AG04449 (cell line): ENCODE measurements at regions of chr22 and their contacts with region 1.

Region 1: GRCh38 chr22:37686002-37686982 is at the start of gene NOL12:
- DNase-seq: no peak
- H3K4me3 ChIP-seq: peak within 1 kb of the TSS; percentile 96
- CTCF ChIP-seq: no peak

Region 2: GRCh38 chr22:37623075-37624016 is 62.9 kb before region 1 on chr22:
- CTCF ChIA-PET with region 1: interaction called, 33 read pairs
- POLR2A ChIA-PET with region 1: interaction called, 5 read pairs
- DNase-seq: no peak
- H3K4me3 ChIP-seq: no peak overlapping the region
- CTCF ChIP-seq: peak; percentile 88

Region 3: DNA sequence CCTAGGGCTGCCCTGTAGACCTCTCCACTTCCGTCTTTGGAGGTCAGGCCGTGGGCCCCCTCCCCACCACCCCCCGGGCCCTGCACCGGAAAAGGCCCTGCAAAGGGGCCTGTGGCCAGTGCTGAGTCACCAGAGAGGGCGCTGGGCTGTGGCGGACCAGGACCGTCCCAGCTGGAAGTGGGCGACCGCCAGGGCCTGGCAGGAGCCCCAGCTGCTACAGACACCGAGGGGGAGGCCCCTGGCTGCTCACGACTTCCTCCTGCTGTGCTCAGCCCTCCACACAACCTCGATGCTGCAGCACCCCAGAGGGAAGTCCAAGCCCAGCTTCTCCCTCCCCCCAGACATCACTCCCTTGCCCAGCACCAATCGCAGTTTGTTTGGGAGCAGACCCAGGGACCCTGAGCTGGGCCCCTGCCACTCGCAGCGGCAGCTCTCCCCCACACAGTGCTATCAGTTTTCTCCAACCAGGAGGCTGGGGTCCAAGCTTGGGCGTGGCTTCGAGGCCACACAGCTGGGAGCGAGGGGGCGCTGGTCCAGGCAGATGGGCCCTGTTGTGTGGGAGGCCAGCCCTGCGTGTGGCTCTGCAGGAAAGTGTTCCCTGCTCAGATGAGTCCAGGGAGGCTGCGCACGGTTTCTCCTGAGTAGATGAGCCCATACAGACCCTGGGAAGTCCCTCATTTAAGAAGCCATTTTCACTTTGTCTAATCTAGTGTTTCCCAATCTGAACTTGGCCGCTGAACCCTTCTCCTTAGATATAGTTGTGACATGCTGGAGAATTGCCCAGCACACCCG is 52.5 kb before region 1 on chr22:
- CTCF ChIA-PET with region 1: interaction called, 333 read pairs
- POLR2A ChIA-PET with region 1: interaction called, 18 read pairs
- DNase-seq: peak; percentile 42
- H3K4me3 ChIP-seq: no peak overlapping the region; the same call in 1 of the 2 replicates
- CTCF ChIP-seq: peak; percentile 39

Region 4: GRCh38 chr22:37658133-37659065 is 27.9 kb before region 1 on chr22 and contains the start of gene PDXP:
- CTCF ChIA-PET with region 1: interaction called, 121 read pairs
- POLR2A ChIA-PET with region 1: interaction called, 41 read pairs
- DNase-seq: peak; percentile 100
- H3K4me3 ChIP-seq: peak within 1 kb of the TSS; percentile 78
- CTCF ChIP-seq: no peak

Region 5: DNA sequence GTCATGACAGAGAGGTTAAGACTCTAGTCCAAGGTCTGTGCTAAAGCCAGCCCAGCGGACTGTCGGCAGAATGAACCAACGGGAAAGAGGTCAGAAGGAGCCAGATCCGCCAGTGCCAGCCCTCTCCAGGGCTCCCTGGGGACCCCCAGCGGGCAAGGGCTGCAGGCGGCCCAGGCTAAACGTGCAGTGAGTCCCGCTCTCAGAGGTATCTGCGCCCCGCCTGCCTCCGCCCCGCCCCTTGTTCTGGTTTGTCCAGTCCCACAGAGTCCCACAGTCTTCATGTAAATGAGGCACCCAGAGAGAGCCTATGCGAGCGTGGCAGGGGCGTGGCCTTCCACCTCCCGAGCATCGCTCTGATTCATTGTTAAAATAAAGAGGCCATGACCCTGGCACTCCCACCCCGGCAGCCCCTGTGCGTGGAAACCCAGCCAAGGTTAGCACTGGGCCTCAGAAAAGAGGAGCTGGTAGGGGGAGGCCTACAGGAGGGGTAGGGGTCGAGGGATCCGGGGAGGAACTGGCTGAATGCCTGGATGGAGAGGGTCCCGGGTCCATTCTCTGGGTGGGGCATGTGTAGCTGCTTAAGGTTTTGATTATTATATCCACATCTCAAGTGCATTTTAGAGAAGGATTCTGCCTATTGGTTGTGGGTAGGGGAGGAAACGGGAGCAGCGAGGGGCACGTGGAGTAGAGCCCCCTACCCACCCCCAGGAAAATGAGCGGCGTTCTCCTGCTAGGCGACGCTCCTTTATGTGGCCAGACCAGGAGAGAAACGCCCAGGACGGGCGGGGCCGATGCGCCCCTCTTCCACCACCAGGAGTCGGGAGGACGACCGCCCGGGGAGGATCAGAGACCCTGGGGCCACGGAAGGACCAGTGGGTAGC is 10.6 kb after region 1 on chr22 and contains the start of gene TRIOBP:
- CTCF ChIA-PET with region 1: interaction called, 15 read pairs
- POLR2A ChIA-PET with region 1: interaction called, 14 read pairs
- DNase-seq: peak; percentile 72
- H3K4me3 ChIP-seq: peak within 1 kb of the TSS; percentile 64
- CTCF ChIP-seq: peak; percentile 63

Region 6: GRCh38 chr22:37896181-37896592 is 209.9 kb after region 1 on chr22:
- CTCF ChIA-PET with region 1: no interaction called
- POLR2A ChIA-PET with region 1: no interaction called
- DNase-seq: no peak
- H3K4me3 ChIP-seq: no peak overlapping the region
- CTCF ChIP-seq: no peak